Ascending aorta (tissue), 2 donors: ENCODE measurements at regions of chrX and their contacts with region 1.

Region 1: GRCh38 chrX:33211356-33212260 is at the start of gene DMD:
- DNase-seq: peak; percentile 13 to 84
- H3K4me3 ChIP-seq: peak within 1 kb of the TSS; percentile 48 to 57
- H3K27ac ChIP-seq: peak within 1 kb of the TSS; percentile 31 to 68
- H3K4me1 ChIP-seq: no peaks in the 10 kb centered on the region
- H3K27me3 ChIP-seq: no peaks in the 10 kb centered on the region
- CTCF ChIP-seq: no peak
- total RNA-seq, gene DMD: 40.0 TPM

Region 2: DNA sequence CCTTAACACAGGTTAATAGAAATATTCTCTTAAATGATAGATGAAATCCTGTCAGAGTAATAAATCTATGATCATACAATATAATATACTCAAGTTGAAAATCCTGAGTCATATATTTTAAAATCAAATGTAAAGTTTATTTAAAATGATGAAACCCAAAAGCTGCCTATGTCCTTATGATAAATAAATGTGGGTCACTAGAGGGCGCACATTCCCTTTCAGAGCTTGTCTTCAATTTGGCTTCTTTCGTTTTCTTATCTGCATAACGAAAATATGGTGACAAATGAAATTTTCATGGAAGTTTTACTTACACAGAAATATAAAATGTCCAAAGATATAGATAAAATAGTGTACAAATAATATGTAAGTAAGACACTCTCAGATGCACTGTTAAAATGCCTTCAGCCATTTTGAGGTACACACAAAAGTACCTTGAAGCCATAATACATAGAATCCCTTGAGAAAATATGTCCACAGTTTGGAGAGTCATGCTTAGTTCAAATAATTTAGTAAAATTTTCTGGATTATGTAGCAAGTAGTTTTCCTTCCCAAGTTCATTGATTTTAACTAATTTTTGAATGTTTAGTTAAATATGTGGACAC is 680.7 kb before region 1 on chrX:
- intact Hi-C with region 1: loop called (anchors 10 kb)
- DNase-seq: no peak
- H3K4me3 ChIP-seq: peak overlapping the region; percentile 12 to 37
- H3K27ac ChIP-seq: no peak overlapping the region
- H3K4me1 ChIP-seq: no peaks in the 10 kb centered on the region
- H3K27me3 ChIP-seq: no peaks in the 10 kb centered on the region
- CTCF ChIP-seq: peak; percentile 24 to 58 (median 44)

Region 3: DNA sequence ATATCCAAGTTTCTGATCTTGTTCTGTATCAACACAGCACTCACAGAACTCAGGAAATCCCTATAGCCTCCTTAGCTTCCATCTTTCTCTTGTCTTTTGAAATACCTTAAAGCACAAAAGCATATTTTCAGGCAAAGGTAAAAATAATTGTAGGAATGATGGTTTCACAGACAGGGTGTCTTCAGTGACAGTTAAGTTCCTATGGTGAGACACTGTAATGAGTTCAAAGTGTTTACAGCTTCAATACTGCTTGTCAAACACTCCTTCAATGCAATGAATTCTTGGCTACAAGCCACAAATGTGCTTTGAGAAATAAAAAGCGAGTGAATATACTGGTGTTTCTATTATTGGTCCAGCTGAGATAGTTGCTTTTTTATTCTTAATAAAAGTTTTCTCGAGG is 466.3 kb before region 1 on chrX:
- intact Hi-C with region 1: no loop called
- DNase-seq: no peak
- H3K4me3 ChIP-seq: no peak overlapping the region
- H3K27ac ChIP-seq: peak overlapping the region; percentile 48 to 54
- H3K4me1 ChIP-seq: peaks cover 0 to 4% of the 10 kb centered on the region in 2 donors
- H3K27me3 ChIP-seq: no peaks in the 10 kb centered on the region
- CTCF ChIP-seq: no peak

Region 4: GRCh38 chrX:33086886-33087285 is 124.7 kb before region 1 on chrX:
- intact Hi-C with region 1: loop called (anchors 10 kb)
- DNase-seq: no peak
- H3K4me3 ChIP-seq: no peak overlapping the region
- H3K27ac ChIP-seq: no peak overlapping the region
- H3K4me1 ChIP-seq: no peaks in the 10 kb centered on the region
- H3K27me3 ChIP-seq: no peaks in the 10 kb centered on the region
- CTCF ChIP-seq: no peak

Region 5: GRCh38 chrX:33336783-33337182 is 125.2 kb after region 1 on chrX:
- intact Hi-C with region 1: loop called (anchors 5 kb)
- DNase-seq: no peak
- H3K4me3 ChIP-seq: peak overlapping the region; percentile 4 to 58
- H3K27ac ChIP-seq: no peak overlapping the region
- H3K4me1 ChIP-seq: no peaks in the 10 kb centered on the region
- H3K27me3 ChIP-seq: no peaks in the 10 kb centered on the region
- CTCF ChIP-seq: peak; percentile 17 to 53 (median 36)